B cell (primary cell): ENCODE measurements at regions of chr11 and their contacts with region 1.

Region 1: DNA sequence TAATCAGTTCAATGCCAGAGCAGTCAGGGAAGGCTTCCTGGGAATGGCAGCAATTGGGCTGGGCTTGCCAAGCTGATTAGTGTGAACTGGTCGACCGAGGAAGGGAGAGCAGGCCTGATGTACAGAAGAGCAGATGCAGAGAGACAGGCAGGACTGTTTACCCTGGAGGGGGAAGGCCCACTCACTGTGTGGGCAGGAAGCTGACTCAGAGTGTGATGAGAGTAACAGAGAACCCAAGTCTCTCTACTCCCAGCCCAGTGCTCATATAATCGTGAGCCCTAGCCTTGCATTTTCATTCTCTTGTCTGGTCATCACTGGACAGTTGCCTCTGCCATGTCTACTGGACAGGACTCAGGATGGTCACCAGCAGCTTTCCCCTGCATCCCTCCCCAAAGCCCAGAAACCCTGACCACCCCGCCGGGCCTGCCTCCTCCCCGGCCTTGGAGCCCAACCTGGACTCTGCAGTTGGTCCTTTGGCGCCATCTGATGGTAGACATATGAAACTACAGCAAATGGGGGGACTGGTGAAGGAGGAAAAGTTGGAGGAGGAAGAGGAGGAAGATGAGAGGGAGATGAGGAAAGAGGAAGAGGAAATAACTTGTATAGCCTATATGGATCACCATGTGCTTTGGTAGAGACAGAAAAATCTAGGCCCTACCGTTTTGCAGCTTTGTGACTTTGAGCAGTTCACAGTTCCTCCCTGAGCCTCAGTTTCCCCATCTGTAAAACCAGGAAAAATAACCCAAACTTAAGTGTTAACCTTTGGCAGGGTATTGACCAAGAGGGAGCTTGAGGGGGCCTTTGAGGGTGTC is 43.4 kb upstream of the PRDM11 start:
- DNase-seq: peak; percentile 82
- ATAC-seq: peak; percentile 95
- H3K4me3 ChIP-seq: peak overlapping the region in 1 of 5 experiments; percentile 18
- H3K4me3 Mint-ChIP-seq: peak overlapping the region; percentile 83
- H3K27ac ChIP-seq: no peak overlapping the region
- H3K27ac Mint-ChIP-seq: peak overlapping the region; percentile 80
- H3K4me1 ChIP-seq: peaks cover 13 to 21% of the 10 kb centered on the region in 2 donors
- H3K4me1 Mint-ChIP-seq: peaks cover 17% of the 10 kb centered on the region
- H3K27me3 ChIP-seq: peaks cover 0 to 8% (median 3%) of the 10 kb centered on the region in 4 experiments
- H3K27me3 Mint-ChIP-seq: peaks cover 13% of the 10 kb centered on the region
- CTCF ChIP-seq: peak; percentile 98

Region 2: GRCh38 chr11:44286268-44286880 is 816.6 kb before region 1 on chr11:
- CTCF ChIA-PET with region 1: no interaction called
- POLR2A ChIA-PET with region 1: no interaction called
- intact Hi-C with region 1: loop called (anchors 10 kb)
- DNase-seq: peak; percentile 77
- ATAC-seq: peak; percentile 74
- H3K4me3 ChIP-seq: no peak overlapping the region
- H3K4me3 Mint-ChIP-seq: no peak overlapping the region
- H3K27ac ChIP-seq: no peak overlapping the region
- H3K27ac Mint-ChIP-seq: no peak overlapping the region
- H3K4me1 ChIP-seq: no peaks in the 10 kb centered on the region
- H3K4me1 Mint-ChIP-seq: no peaks in the 10 kb centered on the region
- H3K27me3 ChIP-seq: no peaks in the 10 kb centered on the region
- H3K27me3 Mint-ChIP-seq: peaks cover 27% of the 10 kb centered on the region
- CTCF ChIP-seq: peak; percentile 96

Region 3: GRCh38 chr11:44916801-44917385 is 186.1 kb before region 1 on chr11:
- CTCF ChIA-PET with region 1: interaction called, 36 read pairs
- POLR2A ChIA-PET with region 1: no interaction called
- intact Hi-C with region 1: no loop called
- DNase-seq: no peak
- ATAC-seq: no peak
- H3K4me3 ChIP-seq: no peak overlapping the region
- H3K4me3 Mint-ChIP-seq: no peak overlapping the region
- H3K27ac ChIP-seq: no peak overlapping the region
- H3K27ac Mint-ChIP-seq: peak overlapping the region; percentile 50
- H3K4me1 ChIP-seq: peaks cover 30 to 34% of the 10 kb centered on the region in 2 donors
- H3K4me1 Mint-ChIP-seq: peaks cover 23% of the 10 kb centered on the region
- H3K27me3 ChIP-seq: no peaks in the 10 kb centered on the region
- H3K27me3 Mint-ChIP-seq: peaks cover 4% of the 10 kb centered on the region
- CTCF ChIP-seq: no peak

Region 4: DNA sequence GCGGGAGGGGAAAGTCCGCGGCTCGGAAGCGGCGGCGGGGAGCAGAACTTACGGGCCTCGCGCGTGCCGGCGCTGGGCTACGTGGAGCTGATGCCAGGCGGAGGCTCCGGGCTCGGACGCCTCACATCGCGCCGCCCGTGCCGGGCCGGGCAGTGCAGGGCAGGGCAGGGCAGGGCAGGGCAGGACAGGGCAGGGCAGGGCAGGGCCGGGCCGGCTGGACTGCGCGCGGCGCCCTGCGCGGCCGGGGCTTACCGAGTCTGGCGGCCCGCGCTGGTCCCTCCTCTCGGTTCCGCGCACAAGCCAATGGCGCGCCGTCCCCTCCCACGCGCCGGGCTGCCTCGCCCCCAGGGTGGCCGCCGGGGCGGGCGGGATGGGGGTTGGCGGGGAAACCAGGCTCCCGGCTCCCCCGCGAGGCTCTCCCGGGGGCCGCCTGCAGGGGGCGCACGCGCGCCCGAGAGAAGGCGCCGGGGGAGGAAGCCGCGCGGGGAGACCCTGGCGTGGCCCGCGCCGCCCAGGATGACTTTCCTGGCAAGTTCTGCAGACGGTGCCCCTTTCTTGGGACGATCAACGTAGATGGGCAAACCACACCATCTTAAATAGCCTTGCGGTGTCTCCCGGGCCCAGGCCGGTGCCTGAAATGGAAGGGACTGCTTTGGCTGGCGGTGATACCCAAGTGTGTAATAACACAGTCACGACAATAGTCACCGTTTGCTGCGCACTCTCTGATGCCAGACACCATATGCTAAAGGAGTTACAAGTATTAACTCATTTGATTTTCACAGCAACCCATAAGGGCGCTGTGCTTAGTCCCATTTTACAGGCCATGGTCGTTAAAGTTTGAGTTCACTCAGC is 152.2 kb before region 1 on chr11 and contains the start of gene TP53I11:
- CTCF ChIA-PET with region 1: interaction called, 114 read pairs
- POLR2A ChIA-PET with region 1: interaction called, 5 read pairs
- intact Hi-C with region 1: no loop called
- DNase-seq: peak; percentile 84
- ATAC-seq: peak; percentile 76
- H3K4me3 ChIP-seq: peak within 1 kb of the TSS; percentile 51 to 97 (median 83)
- H3K4me3 Mint-ChIP-seq: peak within 1 kb of the TSS; percentile 89
- H3K27ac ChIP-seq: peak within 1 kb of the TSS; percentile 64 to 85
- H3K27ac Mint-ChIP-seq: peak within 1 kb of the TSS; percentile 78
- H3K4me1 ChIP-seq: peaks cover 13 to 31% of the 10 kb centered on the region in 2 donors
- H3K4me1 Mint-ChIP-seq: peaks cover 61% of the 10 kb centered on the region
- H3K27me3 ChIP-seq: no peaks in the 10 kb centered on the region
- H3K27me3 Mint-ChIP-seq: no peaks in the 10 kb centered on the region
- CTCF ChIP-seq: peak; percentile 80
- total RNA-seq, gene TP53I11: 229 and 240 TPM in 2 replicates

Region 5: DNA sequence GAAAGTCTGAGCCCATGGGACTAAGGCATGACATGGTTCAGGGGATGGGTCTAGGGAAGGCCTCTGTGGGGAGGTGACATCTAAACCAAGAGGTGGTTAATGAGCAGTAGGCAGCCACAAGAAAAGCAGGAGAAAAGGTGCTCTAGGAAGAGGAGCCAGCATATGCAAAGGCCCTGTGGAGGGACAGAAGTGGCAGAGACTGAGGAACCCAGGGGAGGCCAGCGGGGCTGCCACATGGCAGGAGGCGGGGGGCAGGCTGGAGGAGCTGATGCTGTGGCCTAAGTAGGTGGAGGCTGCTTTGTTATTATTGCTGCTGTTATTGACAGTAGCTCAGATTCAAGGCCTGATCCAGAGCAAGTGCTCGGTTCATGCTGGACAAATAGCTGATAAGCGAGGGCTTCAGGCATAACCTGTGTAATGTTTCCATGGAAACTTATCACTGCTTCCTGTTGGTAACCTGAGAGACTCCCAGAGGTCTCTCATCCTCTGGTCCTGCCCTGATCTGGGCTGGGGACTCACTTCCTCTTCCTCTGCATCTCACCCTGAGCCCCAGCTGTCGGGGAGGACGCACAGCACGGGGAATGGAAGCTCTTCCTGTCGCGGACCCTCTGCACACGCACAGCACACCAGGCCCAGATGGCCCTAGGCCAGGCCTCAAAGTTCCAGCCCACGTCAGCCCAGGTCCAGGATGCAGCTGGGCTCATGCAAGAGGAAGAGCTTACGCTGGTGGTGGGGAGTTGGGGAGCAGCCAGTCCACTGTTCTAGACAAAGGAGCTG is 77.1 kb before region 1 on chr11:
- CTCF ChIA-PET with region 1: interaction called, 84 read pairs
- POLR2A ChIA-PET with region 1: interaction called, 4 read pairs
- intact Hi-C with region 1: loop called (anchors 1 kb)
- DNase-seq: peak; percentile 82
- ATAC-seq: peak; percentile 50
- H3K4me3 ChIP-seq: no peak overlapping the region
- H3K4me3 Mint-ChIP-seq: peak overlapping the region; percentile 51
- H3K27ac ChIP-seq: peak overlapping the region; percentile 72 to 79
- H3K27ac Mint-ChIP-seq: peak overlapping the region; percentile 96
- H3K4me1 ChIP-seq: peaks cover 46 to 58% of the 10 kb centered on the region in 2 donors
- H3K4me1 Mint-ChIP-seq: peaks cover 66% of the 10 kb centered on the region
- H3K27me3 ChIP-seq: peaks cover 0 to 2% (median 0%) of the 10 kb centered on the region in 4 experiments
- H3K27me3 Mint-ChIP-seq: no peaks in the 10 kb centered on the region
- CTCF ChIP-seq: no peak

Region 6: GRCh38 chr11:45163956-45164575 is 61.0 kb after region 1 on chr11:
- CTCF ChIA-PET with region 1: no interaction called
- POLR2A ChIA-PET with region 1: no interaction called
- intact Hi-C with region 1: no loop called
- DNase-seq: no peak
- ATAC-seq: no peak
- H3K4me3 ChIP-seq: no peak overlapping the region
- H3K4me3 Mint-ChIP-seq: no peak overlapping the region
- H3K27ac ChIP-seq: no peak overlapping the region
- H3K27ac Mint-ChIP-seq: no peak overlapping the region
- H3K4me1 ChIP-seq: peaks cover 10 to 11% of the 10 kb centered on the region in 2 donors
- H3K4me1 Mint-ChIP-seq: peaks cover 31% of the 10 kb centered on the region
- H3K27me3 ChIP-seq: no peaks in the 10 kb centered on the region
- H3K27me3 Mint-ChIP-seq: no peaks in the 10 kb centered on the region
- CTCF ChIP-seq: no peak

Region 7: DNA sequence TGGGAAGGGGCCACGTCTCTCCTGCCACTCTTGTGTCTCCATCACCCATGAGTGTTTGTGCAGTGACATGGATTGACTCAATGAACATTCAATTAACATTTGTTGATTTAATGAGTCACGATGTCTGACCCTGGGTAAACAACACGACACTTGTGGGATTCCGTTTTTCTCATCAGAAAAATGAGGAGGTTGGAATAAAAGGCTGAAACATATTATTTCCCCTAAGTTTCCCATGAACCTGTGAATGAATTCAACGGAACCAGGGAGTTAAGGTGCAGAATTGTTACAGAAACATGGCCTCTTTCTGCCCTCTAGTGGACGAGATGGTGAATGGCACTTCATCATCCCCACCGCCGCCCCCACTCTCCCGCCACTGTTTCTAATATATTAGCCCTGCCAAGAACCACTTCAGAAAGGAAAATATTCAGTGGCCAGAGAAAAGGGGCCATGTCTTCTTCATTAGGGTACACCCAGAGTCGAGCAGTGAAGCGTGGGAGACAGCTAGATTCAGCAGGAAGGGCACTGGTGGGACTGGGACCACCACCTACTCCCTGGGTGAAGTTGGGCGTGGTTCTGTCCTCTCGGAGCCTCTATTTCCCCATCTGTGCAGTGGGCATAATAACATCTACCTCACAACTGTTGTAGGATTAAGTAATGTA is 229.4 kb after region 1 on chr11:
- CTCF ChIA-PET with region 1: interaction called, 238 read pairs
- POLR2A ChIA-PET with region 1: no interaction called
- intact Hi-C with region 1: no loop called
- DNase-seq: peak; percentile 62
- ATAC-seq: peak; percentile 53
- H3K4me3 ChIP-seq: no peak overlapping the region
- H3K4me3 Mint-ChIP-seq: no peak overlapping the region
- H3K27ac ChIP-seq: no peak overlapping the region
- H3K27ac Mint-ChIP-seq: no peak overlapping the region
- H3K4me1 ChIP-seq: no peaks in the 10 kb centered on the region
- H3K4me1 Mint-ChIP-seq: peaks cover 6% of the 10 kb centered on the region
- H3K27me3 ChIP-seq: peaks cover 0 to 15% (median 0%) of the 10 kb centered on the region in 4 experiments
- H3K27me3 Mint-ChIP-seq: peaks cover 29% of the 10 kb centered on the region
- CTCF ChIP-seq: peak; percentile 95